CD8-positive, alpha-beta T cell (primary cell): ENCODE measurements at regions of chr6 and their contacts with region 1.

Region 1: GRCh38 chr6:142850679-142851423 is 94.1 kb downstream of the HIVEP2 start:
- DNase-seq: peak in 4 of 9 experiments; percentile 34 to 77 (median 55)
- ATAC-seq: peak; percentile 57
- H3K4me3 ChIP-seq: no peak overlapping the region
- H3K4me3 Mint-ChIP-seq: peak overlapping the region; percentile 63
- H3K27ac ChIP-seq: peak overlapping the region in 1 of 2 experiments; percentile 32
- H3K27ac Mint-ChIP-seq: peak overlapping the region; percentile 89
- H3K4me1 ChIP-seq: peaks cover 91% of the 10 kb centered on the region
- H3K4me1 Mint-ChIP-seq: peaks cover 94% of the 10 kb centered on the region
- H3K27me3 ChIP-seq: no peaks in the 10 kb centered on the region
- H3K27me3 Mint-ChIP-seq: no peaks in the 10 kb centered on the region
- CTCF ChIP-seq: no peak

Region 2: GRCh38 chr6:141248021-141248799 is 1602.6 kb before region 1 on chr6:
- CTCF ChIA-PET with region 1: no interaction called
- POLR2A ChIA-PET with region 1: no interaction called
- intact Hi-C with region 1: no loop called
- DNase-seq: no peak
- ATAC-seq: no peak
- H3K4me3 ChIP-seq: no peak overlapping the region
- H3K4me3 Mint-ChIP-seq: no peak overlapping the region
- H3K27ac ChIP-seq: no peak overlapping the region
- H3K27ac Mint-ChIP-seq: no peak overlapping the region
- H3K4me1 ChIP-seq: no peaks in the 10 kb centered on the region
- H3K4me1 Mint-ChIP-seq: no peaks in the 10 kb centered on the region
- H3K27me3 ChIP-seq: no peaks in the 10 kb centered on the region
- H3K27me3 Mint-ChIP-seq: no peaks in the 10 kb centered on the region
- CTCF ChIP-seq: no peak

Region 3: GRCh38 chr6:142746524-142746923 is 104.3 kb before region 1 on chr6:
- CTCF ChIA-PET with region 1: interaction called, 12 read pairs
- POLR2A ChIA-PET with region 1: no interaction called
- intact Hi-C with region 1: no loop called
- DNase-seq: peak in 8 of 9 experiments; percentile 6 to 71 (median 39)
- ATAC-seq: peak; percentile 58
- H3K4me3 ChIP-seq: no peak overlapping the region
- H3K4me3 Mint-ChIP-seq: no peak overlapping the region
- H3K27ac ChIP-seq: no peak overlapping the region
- H3K27ac Mint-ChIP-seq: no peak overlapping the region
- H3K4me1 ChIP-seq: peaks cover 6% of the 10 kb centered on the region
- H3K4me1 Mint-ChIP-seq: peaks cover 15% of the 10 kb centered on the region
- H3K27me3 ChIP-seq: no peaks in the 10 kb centered on the region
- H3K27me3 Mint-ChIP-seq: no peaks in the 10 kb centered on the region
- CTCF ChIP-seq: peak; percentile 42

Region 4: DNA sequence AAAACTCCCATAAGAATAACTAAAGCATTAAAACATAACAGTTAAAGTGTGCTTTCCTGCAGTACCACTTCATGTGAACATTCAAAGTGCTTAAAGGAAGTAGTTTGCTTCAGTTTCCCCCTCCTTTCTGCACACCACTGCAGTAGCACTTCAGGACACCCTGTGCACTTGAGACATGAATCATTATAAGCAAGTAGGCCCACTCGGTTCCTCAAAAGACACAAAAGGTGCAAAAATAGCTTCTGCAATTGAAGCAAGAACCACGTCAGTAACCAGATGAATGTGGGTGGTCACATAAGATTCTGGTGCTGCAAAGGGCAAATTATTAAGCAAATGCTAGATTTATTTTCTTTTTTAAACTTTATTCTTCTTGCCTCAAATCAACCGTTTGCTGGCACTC is 66.5 kb before region 1 on chr6:
- CTCF ChIA-PET with region 1: no interaction called
- POLR2A ChIA-PET with region 1: no interaction called
- intact Hi-C with region 1: loop called in 1 of 2 experiments (anchors 5 kb)
- DNase-seq: peak in 4 of 9 experiments; percentile 14 to 55 (median 25)
- ATAC-seq: peak; percentile 86
- H3K4me3 ChIP-seq: no peak overlapping the region
- H3K4me3 Mint-ChIP-seq: no peak overlapping the region
- H3K27ac ChIP-seq: no peak overlapping the region
- H3K27ac Mint-ChIP-seq: peak overlapping the region; percentile 76
- H3K4me1 ChIP-seq: peaks cover 23% of the 10 kb centered on the region
- H3K4me1 Mint-ChIP-seq: peaks cover 63% of the 10 kb centered on the region
- H3K27me3 ChIP-seq: no peaks in the 10 kb centered on the region
- H3K27me3 Mint-ChIP-seq: no peaks in the 10 kb centered on the region
- CTCF ChIP-seq: no peak

Region 5: GRCh38 chr6:142810952-142811514 is 39.8 kb before region 1 on chr6:
- CTCF ChIA-PET with region 1: interaction called, 3 read pairs
- POLR2A ChIA-PET with region 1: no interaction called
- intact Hi-C with region 1: loop called in 1 of 2 experiments (anchors 5 kb)
- DNase-seq: peak in 2 of 9 experiments; percentile 36 to 64
- ATAC-seq: peak; percentile 48
- H3K4me3 ChIP-seq: no peak overlapping the region
- H3K4me3 Mint-ChIP-seq: peak overlapping the region; percentile 0
- H3K27ac ChIP-seq: no peak overlapping the region
- H3K27ac Mint-ChIP-seq: peak overlapping the region; percentile 14
- H3K4me1 ChIP-seq: peaks cover 25% of the 10 kb centered on the region
- H3K4me1 Mint-ChIP-seq: peaks cover 81% of the 10 kb centered on the region
- H3K27me3 ChIP-seq: no peaks in the 10 kb centered on the region
- H3K27me3 Mint-ChIP-seq: no peaks in the 10 kb centered on the region
- CTCF ChIP-seq: no peak